Thyroid gland (tissue), 4 donors: ENCODE measurements at regions of chr1 and their contacts with region 1.

Region 1: DNA sequence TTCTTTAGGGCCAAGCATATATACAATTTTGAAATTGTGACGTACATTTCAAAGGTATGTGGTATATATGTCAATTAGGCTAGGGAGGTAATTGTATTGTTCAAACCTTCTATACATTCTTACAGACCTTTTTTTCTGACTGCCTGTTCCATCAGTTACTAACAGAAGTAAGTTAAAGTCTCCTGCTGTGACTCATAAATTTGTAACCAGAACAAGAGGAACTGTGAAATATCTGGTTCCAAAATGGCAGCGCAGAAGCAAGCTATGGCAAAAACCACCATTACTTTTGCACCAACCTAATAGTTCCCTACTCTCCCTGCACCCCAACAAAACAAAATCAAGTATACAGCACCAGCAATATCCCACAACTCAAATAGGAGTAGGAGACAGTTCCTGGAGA is 93.6 kb downstream of the ENAH start:
- DNase-seq: no peak
- H3K4me3 ChIP-seq: no peak overlapping the region
- H3K27ac ChIP-seq: no peak overlapping the region
- H3K4me1 ChIP-seq: no peaks in the 10 kb centered on the region
- H3K27me3 ChIP-seq: no peaks in the 10 kb centered on the region
- CTCF ChIP-seq: no peak
- POLR2A ChIP-seq: no peak

Region 2: GRCh38 chr1:225772323-225772768 is 213.0 kb after region 1 on chr1:
- intact Hi-C with region 1: loop called (anchors 5 kb)
- DNase-seq: peak; percentile 90 to 95
- H3K4me3 ChIP-seq: no peak overlapping the region
- H3K27ac ChIP-seq: peak overlapping the region in 1 of 3 donors; percentile 35
- H3K4me1 ChIP-seq: peaks cover 4 to 22% of the 10 kb centered on the region in 2 donors
- H3K27me3 ChIP-seq: no peaks in the 10 kb centered on the region
- CTCF ChIP-seq: peak; percentile 58 to 98 (median 90)
- POLR2A ChIP-seq: no peak

Region 3: GRCh38 chr1:225845571-225846259 is 286.4 kb after region 1 on chr1:
- intact Hi-C with region 1: no loop called
- DNase-seq: peak; percentile 74
- H3K4me3 ChIP-seq: no peak overlapping the region
- H3K27ac ChIP-seq: no peak overlapping the region
- H3K4me1 ChIP-seq: no peaks in the 10 kb centered on the region
- H3K27me3 ChIP-seq: no peaks in the 10 kb centered on the region
- CTCF ChIP-seq: peak in 4 of 6 experiments; percentile 53 to 64 (median 60)
- POLR2A ChIP-seq: no peak